Posterior cingulate gyrus (tissue), 11 donors: ENCODE measurements at regions of chr6 and their contacts with region 1.

Region 1: DNA sequence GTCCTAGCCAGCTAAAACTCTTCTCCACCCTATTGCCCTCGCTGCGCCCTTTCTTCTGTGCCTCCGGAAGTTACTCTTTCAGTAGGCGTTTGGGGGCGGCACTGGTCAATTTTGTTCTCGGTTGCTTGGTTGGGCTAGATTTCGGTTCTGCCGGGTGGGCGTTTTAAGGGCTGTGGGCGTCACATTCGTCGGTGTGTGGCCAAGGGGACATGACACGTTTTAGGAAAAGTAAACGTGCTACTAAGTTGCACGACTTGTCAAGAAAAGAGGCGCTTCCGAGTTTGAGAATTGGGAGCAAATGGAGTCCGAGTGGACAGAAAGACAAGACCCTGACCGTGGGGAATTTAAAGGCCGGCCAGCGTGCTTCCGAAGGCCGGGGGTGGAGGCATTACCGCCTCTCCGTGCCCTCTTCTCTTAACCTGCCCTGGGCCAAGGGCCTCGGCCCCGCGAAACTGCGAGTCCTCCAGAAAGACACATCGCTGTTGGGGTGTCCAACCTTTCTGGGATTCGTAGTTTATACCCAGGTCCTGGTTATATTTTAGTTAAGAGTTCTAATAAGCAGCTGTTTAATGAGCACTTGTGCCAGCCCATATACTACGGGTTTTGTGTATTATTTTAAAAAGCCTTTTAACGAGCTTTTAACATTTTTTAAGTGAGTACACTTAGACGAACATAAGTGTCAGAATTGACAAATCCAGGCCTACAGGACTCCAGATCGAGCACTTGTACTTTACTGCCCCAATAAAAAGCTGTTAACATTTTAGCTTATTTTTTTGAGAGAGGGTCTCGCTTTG is 661 bp upstream of the BAG6 start:
- DNase-seq: peak; percentile 74 to 96 (median 82)

Region 2: DNA sequence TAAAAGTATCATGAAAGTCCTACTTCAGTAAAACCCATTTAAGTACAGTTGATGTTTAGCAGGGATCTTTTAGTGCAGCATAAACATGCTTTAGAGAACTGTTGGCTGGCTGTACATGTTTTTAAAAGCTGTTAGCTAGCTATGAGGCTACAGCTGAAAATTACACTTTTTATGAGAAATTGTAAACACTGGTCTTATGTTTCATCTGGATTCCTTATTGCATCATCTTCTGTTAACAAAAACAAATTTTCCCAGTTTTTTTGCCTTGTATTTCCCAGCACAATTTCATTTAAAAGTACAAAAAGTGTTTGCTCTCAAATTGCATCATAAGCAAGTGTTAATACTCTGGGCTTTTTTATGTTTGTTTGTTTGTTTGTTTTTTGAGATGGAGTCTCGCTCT is 1182.2 kb before region 1 on chr6:
- intact Hi-C with region 1: no loop called
- DNase-seq: no peak

Region 3: GRCh38 chr6:31619805-31620585 is 33.1 kb before region 1 on chr6:
- intact Hi-C with region 1: loop called (anchors 1 kb)
- DNase-seq: peak; percentile 90 to 100 (median 97)

Region 4: GRCh38 chr6:31784098-31784925 is 131.2 kb after region 1 on chr6:
- intact Hi-C with region 1: no loop called
- DNase-seq: peak in 2 of 10 donors; percentile 59 to 78